ENCODE measurements at regions of chr6 and their contacts with region 1.

Region 1: DNA sequence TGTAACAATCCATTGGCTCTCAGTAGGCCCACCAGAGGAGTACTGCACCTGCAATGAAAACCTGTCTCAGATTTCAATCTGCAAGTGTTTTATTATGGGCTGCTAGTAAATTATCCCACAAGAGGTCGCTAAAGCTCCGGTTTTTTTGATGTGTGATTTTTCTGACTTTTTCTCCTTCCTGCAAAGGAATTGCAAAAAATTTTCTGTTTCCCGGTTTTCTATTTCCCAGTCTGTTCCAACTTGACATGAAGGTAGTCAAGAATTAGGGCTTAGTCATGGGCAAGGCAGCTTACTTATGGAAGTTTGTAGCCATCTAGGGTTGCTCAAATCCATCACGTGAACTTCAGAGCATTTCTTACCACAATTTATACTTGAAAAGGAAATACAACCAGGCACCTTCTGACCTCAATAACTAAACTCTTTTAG is 38.5 kb upstream of the AHI1 start:
- DNase-seq: peak; percentile 4
- ATAC-seq: peak; percentile 60
- H3K4me3 ChIP-seq: no peak overlapping the region
- H3K27ac ChIP-seq: no peak overlapping the region
- H3K4me1 ChIP-seq: no peaks in the 10 kb centered on the region
- H3K27me3 ChIP-seq: no peaks in the 10 kb centered on the region; a peak in 1 of 4 replicates
- CTCF ChIP-seq: peak; percentile 51 to 69 (median 58); a peak in 5 of 6 replicates
- EP300 ChIP-seq: no peak
- POLR2A ChIP-seq: no peak
- RAD21 ChIP-seq: peak; percentile 87

Region 2: GRCh38 chr6:135451693-135452092 is 84.3 kb before region 1 on chr6:
- CTCF ChIA-PET with region 1: interaction called, 15 read pairs
- POLR2A ChIA-PET with region 1: no interaction called
- RAD21 ChIA-PET with region 1: no interaction called
- SMC1A ChIA-PET with region 1: interaction called, 6 read pairs
- in situ Hi-C with region 1: no loop called
- intact Hi-C with region 1: loop called (anchors 2 kb)
- DNase-seq: no peak
- ATAC-seq: peak; percentile 34; the same call in 2 of the 3 replicates
- H3K4me3 ChIP-seq: no peak overlapping the region
- H3K27ac ChIP-seq: no peak overlapping the region
- H3K4me1 ChIP-seq: no peaks in the 10 kb centered on the region; the same call in 1 of the 2 replicates
- H3K27me3 ChIP-seq: no peaks in the 10 kb centered on the region
- CTCF ChIP-seq: peak; percentile 49 to 67 (median 58)
- EP300 ChIP-seq: no peak
- POLR2A ChIP-seq: no peak
- RAD21 ChIP-seq: peak; percentile 77

Region 3: DNA sequence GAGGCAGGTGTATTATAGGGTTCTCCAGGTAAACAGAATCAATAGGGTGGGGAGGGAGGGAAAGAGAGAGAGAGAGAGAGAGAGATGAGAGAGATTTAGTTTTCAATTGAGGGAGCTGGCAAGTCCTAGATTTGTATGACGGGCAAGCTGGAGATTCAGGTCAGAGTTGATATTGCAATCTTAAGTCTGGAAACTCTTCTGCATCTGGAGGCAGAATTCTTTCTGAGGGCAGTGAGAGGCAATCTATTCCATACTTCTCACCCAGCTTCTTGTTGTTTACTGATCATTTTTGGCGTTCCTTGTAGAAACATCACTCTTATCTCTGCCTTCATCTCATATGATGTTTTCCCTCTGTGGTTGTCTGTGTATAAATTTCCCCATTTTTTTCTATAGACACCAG is 12.5 kb after region 1 on chr6:
- CTCF ChIA-PET with region 1: interaction called, 14 read pairs
- POLR2A ChIA-PET with region 1: no interaction called
- RAD21 ChIA-PET with region 1: no interaction called
- SMC1A ChIA-PET with region 1: interaction called, 6 read pairs
- in situ Hi-C with region 1: no loop called
- intact Hi-C with region 1: no loop called
- DNase-seq: no peak
- ATAC-seq: no peak
- H3K4me3 ChIP-seq: no peak overlapping the region
- H3K27ac ChIP-seq: no peak overlapping the region
- H3K4me1 ChIP-seq: no peaks in the 10 kb centered on the region
- H3K27me3 ChIP-seq: no peaks in the 10 kb centered on the region
- CTCF ChIP-seq: no peak
- EP300 ChIP-seq: no peak
- POLR2A ChIP-seq: no peak
- RAD21 ChIP-seq: no peak

Region 4: DNA sequence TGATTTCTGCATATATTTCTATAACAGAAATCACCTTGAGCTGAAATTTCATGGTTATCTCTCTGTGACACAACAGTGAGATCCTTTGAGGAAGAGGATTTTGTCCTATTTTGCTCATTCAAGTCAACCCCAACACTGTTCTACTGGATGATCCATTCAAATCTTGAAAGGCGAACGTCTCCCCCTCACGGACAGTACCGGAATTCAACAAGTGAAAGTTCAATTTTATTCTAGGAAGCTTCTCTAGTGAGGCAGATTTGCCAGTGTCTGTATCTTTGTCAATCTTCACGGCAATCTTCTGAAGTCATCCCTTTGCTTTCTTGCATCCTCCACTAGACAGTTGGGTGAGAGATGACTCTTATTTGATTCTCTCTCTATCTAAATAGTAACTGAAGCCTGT is 223.8 kb after region 1 on chr6:
- CTCF ChIA-PET with region 1: interaction called, 36 read pairs
- POLR2A ChIA-PET with region 1: no interaction called
- RAD21 ChIA-PET with region 1: interaction called, 3 read pairs
- SMC1A ChIA-PET with region 1: interaction called, 7 read pairs
- in situ Hi-C with region 1: no loop called
- intact Hi-C with region 1: loop called (anchors 2 kb)
- DNase-seq: no peak
- ATAC-seq: peak; percentile 35; the same call in 2 of the 3 replicates
- H3K4me3 ChIP-seq: no peak overlapping the region
- H3K27ac ChIP-seq: no peak overlapping the region
- H3K4me1 ChIP-seq: no peaks in the 10 kb centered on the region
- H3K27me3 ChIP-seq: no peaks in the 10 kb centered on the region
- CTCF ChIP-seq: no peak; a peak in 1 of 6 replicates
- EP300 ChIP-seq: no peak
- POLR2A ChIP-seq: no peak
- RAD21 ChIP-seq: peak; percentile 29; the same call in 1 of the 2 replicates